Kidney (tissue), 22 donors: ENCODE measurements at regions of chr11 and their contacts with region 1.

Region 1: GRCh38 chr11:112219476-112220232 is 6.6 kb upstream of the PTS start:
- DNase-seq: peak in 4 of 5 donors; percentile 38 to 86 (median 64)
- H3K4me3 ChIP-seq: no peak overlapping the region
- H3K27ac ChIP-seq: no peak overlapping the region
- H3K4me1 ChIP-seq: peaks cover 0 to 4% (median 2%) of the 10 kb centered on the region in 3 donors
- H3K27me3 ChIP-seq: no peaks in the 10 kb centered on the region
- CTCF ChIP-seq: peak; percentile 95

Region 2: GRCh38 chr11:112033156-112033555 is 186.5 kb before region 1 on chr11:
- intact Hi-C with region 1: no loop called
- DNase-seq: no peak
- H3K4me3 ChIP-seq: no peak overlapping the region
- H3K27ac ChIP-seq: no peak overlapping the region
- H3K4me1 ChIP-seq: no peaks in the 10 kb centered on the region
- H3K27me3 ChIP-seq: no peaks in the 10 kb centered on the region
- CTCF ChIP-seq: no peak

Region 3: GRCh38 chr11:112100462-112100861 is 119.2 kb before region 1 on chr11:
- intact Hi-C with region 1: no loop called
- DNase-seq: no peak
- H3K4me3 ChIP-seq: no peak overlapping the region
- H3K27ac ChIP-seq: no peak overlapping the region
- H3K4me1 ChIP-seq: no peaks in the 10 kb centered on the region
- H3K27me3 ChIP-seq: no peaks in the 10 kb centered on the region
- CTCF ChIP-seq: no peak

Region 4: DNA sequence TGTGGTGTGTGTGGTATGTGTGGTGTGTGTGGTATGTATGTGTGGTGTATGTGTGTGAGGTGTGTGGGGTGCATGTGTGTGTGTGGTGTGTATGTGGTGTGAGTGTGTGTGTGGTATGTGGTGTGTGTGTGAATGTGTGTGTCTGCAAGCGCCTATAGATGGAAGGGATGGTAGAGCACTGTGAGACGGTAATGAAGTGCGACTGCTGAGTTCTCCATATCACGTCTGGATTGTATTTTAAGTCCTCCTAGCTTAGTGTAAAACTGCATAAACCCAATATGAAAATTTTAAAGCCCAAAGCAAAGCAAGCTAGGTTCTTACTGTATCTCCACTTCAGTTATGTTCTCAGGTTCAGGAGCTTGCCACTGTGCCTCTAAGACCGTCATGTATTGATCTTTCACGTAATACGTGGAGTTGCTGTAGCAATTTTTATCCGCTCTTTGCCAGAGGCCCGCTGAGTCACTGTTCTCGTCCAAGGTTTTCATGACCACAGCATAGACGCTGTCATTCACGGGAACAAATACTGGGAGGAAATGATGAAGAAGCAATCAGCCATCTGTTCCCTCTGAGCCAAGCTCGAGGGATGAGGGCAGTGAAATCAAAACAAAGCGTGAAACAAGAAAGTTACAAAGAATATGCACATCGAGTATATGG is 35.5 kb after region 1 on chr11:
- intact Hi-C with region 1: no loop called
- DNase-seq: no peak
- H3K4me3 ChIP-seq: no peak overlapping the region
- H3K27ac ChIP-seq: no peak overlapping the region
- H3K4me1 ChIP-seq: peaks cover 0 to 4% (median 0%) of the 10 kb centered on the region in 3 donors
- H3K27me3 ChIP-seq: no peaks in the 10 kb centered on the region
- CTCF ChIP-seq: no peak

Region 5: GRCh38 chr11:112280268-112281126 is 60.8 kb after region 1 on chr11:
- intact Hi-C with region 1: loop called (anchors 2 kb)
- DNase-seq: peak in 4 of 5 donors; percentile 73 to 93 (median 82)
- H3K4me3 ChIP-seq: peak overlapping the region; percentile 63 to 67 (median 65)
- H3K27ac ChIP-seq: no peak overlapping the region
- H3K4me1 ChIP-seq: no peaks in the 10 kb centered on the region
- H3K27me3 ChIP-seq: no peaks in the 10 kb centered on the region
- CTCF ChIP-seq: peak; percentile 86